Mammary epithelial cell (primary cell): ENCODE measurements at regions of chr7 and their contacts with region 1.

Region 1: DNA sequence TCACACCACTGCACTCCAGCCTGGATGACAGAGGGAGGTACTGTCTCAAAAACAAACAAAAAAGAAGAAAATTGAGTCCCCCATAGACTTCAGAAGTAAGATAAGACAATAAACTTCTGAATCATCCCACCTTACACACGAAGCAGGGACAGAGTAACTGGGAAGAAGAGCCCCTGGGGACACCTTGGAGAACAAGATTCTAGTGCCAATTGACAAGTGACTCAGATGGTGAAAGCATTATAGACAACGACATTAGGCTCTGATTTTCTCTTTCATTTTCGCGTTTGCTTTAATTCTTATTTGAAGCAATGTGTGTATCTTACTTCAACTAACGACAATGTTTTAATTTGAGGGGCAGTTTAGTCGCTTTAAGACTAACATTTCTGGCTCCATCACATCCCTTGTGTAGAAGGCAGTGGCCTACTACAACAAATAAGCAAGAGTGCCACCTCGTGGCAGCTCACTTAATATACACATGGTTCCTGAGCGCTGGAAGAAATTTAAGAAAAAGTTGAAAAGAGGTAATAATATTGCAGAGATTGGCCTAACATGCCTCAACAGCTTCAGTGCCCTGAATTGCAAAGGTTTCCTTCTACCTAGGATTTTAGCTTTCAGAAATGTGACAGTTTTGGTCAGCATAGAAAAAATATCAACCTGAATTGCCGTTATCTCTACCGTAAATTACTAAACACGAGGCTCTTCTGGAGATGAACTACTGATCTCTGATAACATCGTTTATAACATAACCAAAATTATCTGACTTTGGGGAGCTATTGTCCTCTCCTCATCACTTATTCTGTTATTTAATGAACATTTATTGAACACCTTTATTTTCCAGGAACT is 36.7 kb downstream of the ASNS start:
- DNase-seq: peak; percentile 25
- H3K4me3 ChIP-seq: no peak overlapping the region
- H3K27ac ChIP-seq: no peak overlapping the region
- H3K4me1 ChIP-seq: no peaks in the 10 kb centered on the region
- H3K27me3 ChIP-seq: no peaks in the 10 kb centered on the region
- CTCF ChIP-seq: peak; percentile 47 to 69

Region 2: DNA sequence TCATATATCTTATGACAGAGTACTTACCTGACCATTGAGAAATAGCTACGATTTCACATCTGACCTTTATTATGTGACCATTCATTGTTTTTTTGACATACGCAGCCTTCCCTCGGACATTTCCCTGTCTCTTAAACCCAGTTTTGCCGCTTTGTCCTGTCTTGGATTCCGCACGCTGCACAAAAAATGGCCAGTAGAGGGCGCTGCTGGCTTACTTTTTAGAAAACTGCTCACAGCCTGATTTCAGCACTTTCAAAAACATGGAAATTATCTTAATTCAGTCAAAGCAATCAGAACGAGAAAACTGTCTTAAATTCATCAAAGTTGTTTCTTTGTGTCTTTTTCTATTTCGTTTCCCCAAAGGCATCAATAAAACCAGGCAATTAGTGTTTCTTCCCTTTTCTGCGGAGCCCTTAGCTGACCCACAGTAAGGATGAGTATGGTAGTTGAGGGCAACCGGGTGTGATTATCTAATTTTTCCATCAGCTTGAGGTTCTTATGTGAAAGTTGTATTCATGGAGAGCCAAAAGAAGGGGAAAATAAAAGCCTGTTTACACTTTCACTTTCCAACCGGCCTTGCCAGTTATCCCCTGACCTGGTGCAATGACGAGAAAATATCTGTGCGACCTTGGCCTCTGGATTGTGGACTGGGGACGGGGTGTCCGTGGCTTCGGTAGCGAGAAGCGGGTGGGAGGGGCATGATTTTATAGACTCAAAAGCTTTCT is 1918.8 kb before region 1 on chr7:
- CTCF ChIA-PET with region 1: no interaction called
- dilution Hi-C with region 1: no loop called
- in situ Hi-C with region 1: loop called in 1 of 2 experiments (anchors 10 kb)
- intact Hi-C with region 1: no loop called
- DNase-seq: peak; percentile 35
- H3K4me3 ChIP-seq: no peak overlapping the region
- H3K27ac ChIP-seq: no peak overlapping the region
- H3K4me1 ChIP-seq: no peaks in the 10 kb centered on the region
- H3K27me3 ChIP-seq: no peaks in the 10 kb centered on the region
- CTCF ChIP-seq: peak; percentile 85 to 92

Region 3: DNA sequence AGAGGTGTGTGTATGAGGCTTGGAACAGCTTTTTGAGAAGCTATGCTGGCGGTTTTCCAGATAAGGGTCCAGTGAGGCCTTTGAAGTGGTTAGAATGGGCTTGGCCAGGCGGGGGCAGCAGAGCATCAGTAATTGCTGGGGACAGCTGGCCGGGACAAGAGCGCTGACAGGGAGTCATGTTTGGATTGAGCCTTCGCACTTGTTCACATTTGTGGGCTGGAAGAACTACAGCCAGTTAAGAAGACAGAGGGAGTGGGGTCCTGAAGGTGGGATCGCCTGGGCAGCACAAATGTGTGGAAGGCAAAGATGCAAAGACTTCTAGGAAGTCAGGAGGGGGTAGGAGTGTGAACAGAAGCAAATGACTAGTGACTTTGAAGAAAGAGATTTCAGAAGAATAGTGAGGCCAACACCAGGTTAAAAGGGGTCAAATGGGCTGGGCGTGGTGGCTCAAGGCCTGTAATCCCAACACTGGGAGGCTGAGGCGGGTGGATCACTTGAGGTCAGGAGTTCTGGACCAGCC is 730.7 kb before region 1 on chr7:
- CTCF ChIA-PET with region 1: no interaction called
- dilution Hi-C with region 1: no loop called
- in situ Hi-C with region 1: loop called in 1 of 2 experiments (anchors 10 kb)
- intact Hi-C with region 1: loop called (anchors 1 kb)
- DNase-seq: peak; percentile 47
- H3K4me3 ChIP-seq: no peak overlapping the region
- H3K27ac ChIP-seq: no peak overlapping the region
- H3K4me1 ChIP-seq: no peaks in the 10 kb centered on the region
- H3K27me3 ChIP-seq: no peaks in the 10 kb centered on the region
- CTCF ChIP-seq: peak; percentile 64 to 83

Region 4: DNA sequence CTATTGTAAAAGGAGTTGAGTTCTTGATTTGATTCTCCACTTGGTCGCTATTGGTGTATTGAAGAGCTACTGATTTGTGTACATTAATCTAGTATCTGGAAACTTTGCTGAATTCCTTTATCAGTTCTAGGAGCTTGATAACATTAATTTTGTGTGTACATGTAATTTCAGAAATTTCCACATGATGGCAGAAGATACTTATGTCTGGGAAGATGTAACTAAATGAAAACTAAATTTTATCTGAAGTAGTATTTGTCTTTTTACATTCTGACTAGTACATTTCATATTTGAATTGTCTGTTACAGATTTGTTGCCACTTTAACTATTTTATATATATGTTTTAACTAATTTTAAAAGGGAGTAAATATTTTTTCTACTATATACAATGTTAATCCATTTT is 690.4 kb before region 1 on chr7:
- CTCF ChIA-PET with region 1: no interaction called
- dilution Hi-C with region 1: no loop called
- in situ Hi-C with region 1: no loop called
- intact Hi-C with region 1: loop called (anchors 1 kb)
- DNase-seq: peak; percentile 11
- H3K4me3 ChIP-seq: no peak overlapping the region
- H3K27ac ChIP-seq: no peak overlapping the region
- H3K4me1 ChIP-seq: no peaks in the 10 kb centered on the region
- H3K27me3 ChIP-seq: no peaks in the 10 kb centered on the region
- CTCF ChIP-seq: peak; percentile 36 to 50

Region 5: DNA sequence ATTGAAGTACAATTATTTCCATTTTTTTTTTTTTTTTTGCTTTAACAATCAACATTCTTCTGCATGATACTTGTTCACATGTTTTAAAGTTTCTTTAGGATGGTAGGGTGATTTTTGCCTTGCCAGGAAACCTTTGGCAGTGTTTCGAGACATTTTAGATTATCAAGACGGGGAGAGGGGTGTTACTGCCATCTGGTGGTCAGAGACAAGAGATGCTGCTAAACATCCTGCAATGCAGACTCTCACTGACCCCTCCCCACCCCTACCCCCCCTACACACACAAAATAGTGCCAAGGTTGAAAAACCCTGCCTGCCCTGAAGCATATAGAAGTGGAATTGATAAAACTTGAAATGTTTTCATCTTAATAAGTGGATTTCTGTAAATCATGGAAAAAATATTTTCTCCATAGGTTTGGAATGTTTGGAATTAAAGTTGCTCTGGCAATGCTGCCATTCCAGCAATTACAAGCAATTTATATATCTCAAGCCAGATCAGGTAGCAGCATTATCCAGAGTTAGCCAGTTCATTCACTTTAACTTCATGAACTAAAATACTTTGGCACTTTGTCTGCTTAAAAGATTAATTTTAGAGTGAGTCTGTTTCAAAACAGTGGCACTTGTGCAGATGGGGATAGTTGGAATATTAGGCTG is 655.9 kb before region 1 on chr7:
- CTCF ChIA-PET with region 1: no interaction called
- dilution Hi-C with region 1: no loop called
- in situ Hi-C with region 1: no loop called
- intact Hi-C with region 1: loop called (anchors 10 kb)
- DNase-seq: peak; percentile 32
- H3K4me3 ChIP-seq: no peak overlapping the region
- H3K27ac ChIP-seq: no peak overlapping the region
- H3K4me1 ChIP-seq: no peaks in the 10 kb centered on the region
- H3K27me3 ChIP-seq: no peaks in the 10 kb centered on the region
- CTCF ChIP-seq: peak; percentile 54 to 78

Region 6: GRCh38 chr7:97499204-97499603 is 336.3 kb before region 1 on chr7:
- CTCF ChIA-PET with region 1: no interaction called
- dilution Hi-C with region 1: no loop called
- in situ Hi-C with region 1: loop called (anchors 10 to 25 kb)
- intact Hi-C with region 1: loop called (anchors 1 kb)
- DNase-seq: peak; percentile 10
- H3K4me3 ChIP-seq: no peak overlapping the region
- H3K27ac ChIP-seq: no peak overlapping the region
- H3K4me1 ChIP-seq: no peaks in the 10 kb centered on the region
- H3K27me3 ChIP-seq: no peaks in the 10 kb centered on the region
- CTCF ChIP-seq: peak; percentile 44 to 71